ENCODE measurements at regions of chr3 and their contacts with region 1.

Region 1: GRCh38 chr3:195738274-195739044 is 17.7 kb downstream of the MUC20 start:
- DNase-seq: no peak
- H3K4me3 ChIP-seq: no peak overlapping the region
- H3K27ac ChIP-seq: no peak overlapping the region
- H3K4me1 ChIP-seq: no peaks in the 10 kb centered on the region; a peak in 1 of 7 replicates
- H3K27me3 ChIP-seq: peaks cover 0 to 3% (median 0%) of the 10 kb centered on the region in 4 experiments; a peak in 1 of 7 replicates
- CTCF ChIP-seq: peak in 2 of 3 experiments; percentile 9 to 15; a peak in 2 of 4 replicates
- EP300 ChIP-seq: no peak
- POLR2A ChIP-seq: no peak
- RAD21 ChIP-seq: no peak; a peak in 1 of 4 replicates

Region 2: DNA sequence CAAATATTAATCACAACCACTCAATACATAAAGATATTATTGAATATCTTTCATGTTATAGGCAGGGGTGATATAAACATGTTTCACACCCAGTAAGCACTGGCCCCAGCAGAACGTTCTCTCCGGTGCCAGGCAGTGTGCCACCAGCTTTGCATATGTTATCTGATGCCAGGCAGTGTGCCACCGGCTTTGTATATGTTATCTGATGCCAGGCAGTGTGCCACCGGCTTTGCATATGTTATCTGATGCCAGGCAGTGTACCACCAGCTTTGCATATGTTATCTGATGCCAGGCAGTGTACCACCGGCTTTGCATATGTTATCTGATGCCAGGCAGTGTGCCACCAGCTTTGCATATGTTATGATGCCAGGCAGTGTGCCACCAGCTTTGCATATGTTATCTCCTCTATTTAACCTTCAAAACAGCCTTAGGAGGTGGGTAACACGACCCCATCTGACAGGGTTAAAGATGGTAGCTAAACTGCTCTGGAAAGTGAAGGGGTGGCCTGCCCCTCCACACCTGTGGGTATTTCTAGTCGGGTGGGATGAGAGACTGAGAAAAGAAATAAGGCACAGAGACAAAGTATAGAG is 10.8 kb before region 1 on chr3:
- CTCF ChIA-PET with region 1: interaction called, 10 read pairs
- POLR2A ChIA-PET with region 1: interaction called, 3 read pairs
- DNase-seq: no peak
- H3K4me3 ChIP-seq: no peak overlapping the region
- H3K27ac ChIP-seq: no peak overlapping the region
- H3K4me1 ChIP-seq: no peaks in the 10 kb centered on the region
- H3K27me3 ChIP-seq: no peaks in the 10 kb centered on the region
- CTCF ChIP-seq: no peak
- EP300 ChIP-seq: no peak
- POLR2A ChIP-seq: no peak
- RAD21 ChIP-seq: no peak

Region 3: DNA sequence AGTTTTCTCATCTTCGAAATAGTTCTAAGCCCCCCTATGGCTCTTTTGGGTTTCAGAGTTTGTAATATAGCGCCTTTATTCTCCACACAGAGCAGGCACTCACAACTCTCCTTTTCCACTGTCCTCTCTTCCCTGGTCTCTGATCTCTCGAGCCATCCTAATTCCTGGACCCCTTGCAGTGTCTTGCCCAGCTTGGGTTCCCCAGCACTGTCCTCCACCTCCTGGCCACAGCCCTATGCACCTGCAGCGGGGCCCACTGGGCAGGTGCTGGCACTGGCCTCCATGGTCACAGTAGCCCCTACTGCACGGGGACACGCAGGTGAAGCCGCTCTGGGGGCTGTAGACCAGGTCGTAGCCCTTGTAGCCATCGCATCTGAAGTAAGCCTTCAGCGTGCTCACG is 10.2 kb after region 1 on chr3:
- CTCF ChIA-PET with region 1: interaction called, 14 read pairs
- POLR2A ChIA-PET with region 1: interaction called, 7 read pairs
- DNase-seq: no peak
- H3K4me3 ChIP-seq: no peak overlapping the region
- H3K27ac ChIP-seq: no peak overlapping the region
- H3K4me1 ChIP-seq: no peaks in the 10 kb centered on the region; a peak in 1 of 7 replicates
- H3K27me3 ChIP-seq: peaks cover 0 to 19% (median 16%) of the 10 kb centered on the region in 4 experiments; a peak in 6 of 7 replicates
- CTCF ChIP-seq: no peak
- EP300 ChIP-seq: no peak
- POLR2A ChIP-seq: no peak
- RAD21 ChIP-seq: no peak

Region 4: GRCh38 chr3:195774917-195775316 is 36.5 kb after region 1 on chr3:
- CTCF ChIA-PET with region 1: no interaction called
- POLR2A ChIA-PET with region 1: no interaction called
- DNase-seq: peak; percentile 21 to 87
- H3K4me3 ChIP-seq: no peak overlapping the region
- H3K27ac ChIP-seq: no peak overlapping the region
- H3K4me1 ChIP-seq: no peaks in the 10 kb centered on the region
- H3K27me3 ChIP-seq: no peaks in the 10 kb centered on the region
- CTCF ChIP-seq: peak; percentile 81 to 91 (median 84)
- EP300 ChIP-seq: no peak
- POLR2A ChIP-seq: no peak
- RAD21 ChIP-seq: peak; percentile 72 to 79

Region 5: DNA sequence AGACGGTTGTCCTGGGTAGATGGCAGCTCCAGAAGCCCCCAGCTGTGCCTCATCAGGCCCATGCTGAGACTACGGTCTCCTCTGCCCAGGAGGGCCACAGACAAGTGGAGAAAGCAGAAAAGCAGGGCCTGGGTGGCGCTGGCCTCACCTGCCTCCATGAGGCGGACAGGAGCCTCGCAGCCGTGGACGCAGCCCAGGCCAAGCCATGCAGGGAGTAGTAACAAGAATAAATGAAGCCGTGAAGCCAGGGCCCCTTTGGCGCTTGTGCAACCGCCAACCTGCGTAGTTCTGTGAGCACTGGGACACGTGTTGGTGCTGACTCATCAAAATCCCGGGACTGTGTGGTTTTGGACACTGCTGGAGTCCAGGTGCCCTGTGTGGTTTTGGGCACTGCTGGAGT is 85.5 kb after region 1 on chr3:
- CTCF ChIA-PET with region 1: no interaction called
- POLR2A ChIA-PET with region 1: no interaction called
- DNase-seq: no peak
- H3K4me3 ChIP-seq: no peak overlapping the region
- H3K27ac ChIP-seq: no peak overlapping the region
- H3K4me1 ChIP-seq: no peaks in the 10 kb centered on the region; a peak in 1 of 7 replicates
- H3K27me3 ChIP-seq: no peaks in the 10 kb centered on the region
- CTCF ChIP-seq: peak; percentile 3 to 22 (median 14); a peak in 3 of 4 replicates
- EP300 ChIP-seq: no peak
- POLR2A ChIP-seq: no peak
- RAD21 ChIP-seq: peak; percentile 24 to 37; a peak in 3 of 4 replicates

Region 6: DNA sequence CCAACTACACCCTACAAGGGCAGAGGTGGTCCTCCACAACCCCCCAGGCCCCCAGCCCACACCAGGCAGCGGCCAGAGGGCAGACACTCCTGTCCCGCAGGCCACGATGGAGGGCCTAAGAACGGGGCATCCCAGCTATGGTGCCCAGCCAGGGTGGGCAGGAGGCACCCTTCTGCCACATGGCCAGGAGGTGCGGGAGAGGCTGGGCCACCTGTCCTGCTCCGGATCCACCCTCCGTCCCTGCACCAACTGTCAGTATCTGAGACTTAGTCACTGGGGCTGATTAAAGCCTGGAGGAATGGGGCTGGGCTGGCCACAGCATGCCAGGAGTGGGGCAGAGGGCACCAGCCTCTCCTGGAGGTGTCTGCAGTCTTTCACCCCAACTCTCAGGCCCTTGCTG is 132.0 kb after region 1 on chr3:
- CTCF ChIA-PET with region 1: no interaction called
- POLR2A ChIA-PET with region 1: no interaction called
- DNase-seq: no peak
- H3K4me3 ChIP-seq: no peak overlapping the region
- H3K27ac ChIP-seq: no peak overlapping the region
- H3K4me1 ChIP-seq: no peaks in the 10 kb centered on the region
- H3K27me3 ChIP-seq: no peaks in the 10 kb centered on the region
- CTCF ChIP-seq: no peak
- EP300 ChIP-seq: no peak
- POLR2A ChIP-seq: no peak
- RAD21 ChIP-seq: no peak